ENCODE measurements at regions of chr17 and their contacts with region 1.

Region 1: DNA sequence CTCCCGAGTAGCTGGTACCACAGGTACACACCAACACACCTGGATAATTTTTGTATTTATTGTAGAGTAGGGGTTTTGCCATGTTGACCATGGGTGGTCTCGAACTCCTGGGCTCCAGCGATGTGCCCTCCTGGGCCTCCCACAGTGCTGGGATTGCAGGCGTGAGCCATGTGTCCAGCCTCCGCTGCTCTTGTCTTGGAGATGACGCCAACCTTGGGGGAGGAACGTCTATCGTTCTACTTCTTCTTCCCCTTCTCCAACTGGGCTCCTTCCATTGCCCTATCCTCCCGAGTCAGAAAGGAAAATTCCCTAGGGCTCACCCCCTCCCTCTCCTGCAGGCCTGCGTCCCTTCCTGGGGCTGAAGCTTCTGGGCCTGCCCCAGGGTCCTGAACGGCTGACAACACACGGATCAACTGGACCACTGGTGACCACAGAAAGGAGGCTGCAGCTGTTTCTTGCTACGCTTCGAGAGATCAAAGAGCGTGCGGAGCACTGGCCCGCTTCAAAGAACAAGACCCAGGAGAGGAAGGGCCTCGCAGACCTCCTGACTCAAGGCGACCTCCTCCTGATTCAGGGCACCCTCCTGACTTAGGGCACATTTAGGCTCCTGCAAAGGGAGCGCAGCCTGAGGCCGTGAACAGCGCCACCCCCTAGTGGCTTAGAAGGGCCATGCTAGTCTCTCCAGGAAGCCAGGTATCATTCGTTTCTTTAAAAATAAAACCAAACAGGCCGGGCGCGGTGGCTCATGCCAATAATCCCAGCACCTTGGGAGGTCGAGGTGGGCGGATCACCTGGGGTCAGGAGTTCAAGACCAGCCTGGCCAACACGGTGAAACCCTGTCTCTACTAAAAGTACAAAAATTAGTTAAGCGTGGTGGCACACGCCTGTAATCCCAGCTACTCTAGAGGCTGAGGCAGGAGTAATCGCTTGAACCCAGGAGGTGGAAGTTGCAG is 48.5 kb upstream of the HELZ start:
- DNase-seq: peak; percentile 54
- ATAC-seq: peak; percentile 88
- H3K4me3 ChIP-seq: no peak overlapping the region
- H3K27ac ChIP-seq: no peak overlapping the region
- H3K4me1 ChIP-seq: no peaks in the 10 kb centered on the region
- H3K27me3 ChIP-seq: no peaks in the 10 kb centered on the region
- CTCF ChIP-seq: peak; percentile 83

Region 2: GRCh38 chr17:67200720-67201301 is 92.7 kb before region 1 on chr17:
- CTCF ChIA-PET with region 1: interaction called, 16 read pairs
- POLR2A ChIA-PET with region 1: no interaction called
- intact Hi-C with region 1: no loop called
- DNase-seq: peak; percentile 53
- ATAC-seq: peak; percentile 82
- H3K4me3 ChIP-seq: no peak overlapping the region
- H3K27ac ChIP-seq: no peak overlapping the region
- H3K4me1 ChIP-seq: no peaks in the 10 kb centered on the region
- H3K27me3 ChIP-seq: no peaks in the 10 kb centered on the region
- CTCF ChIP-seq: peak; percentile 80

Region 3: DNA sequence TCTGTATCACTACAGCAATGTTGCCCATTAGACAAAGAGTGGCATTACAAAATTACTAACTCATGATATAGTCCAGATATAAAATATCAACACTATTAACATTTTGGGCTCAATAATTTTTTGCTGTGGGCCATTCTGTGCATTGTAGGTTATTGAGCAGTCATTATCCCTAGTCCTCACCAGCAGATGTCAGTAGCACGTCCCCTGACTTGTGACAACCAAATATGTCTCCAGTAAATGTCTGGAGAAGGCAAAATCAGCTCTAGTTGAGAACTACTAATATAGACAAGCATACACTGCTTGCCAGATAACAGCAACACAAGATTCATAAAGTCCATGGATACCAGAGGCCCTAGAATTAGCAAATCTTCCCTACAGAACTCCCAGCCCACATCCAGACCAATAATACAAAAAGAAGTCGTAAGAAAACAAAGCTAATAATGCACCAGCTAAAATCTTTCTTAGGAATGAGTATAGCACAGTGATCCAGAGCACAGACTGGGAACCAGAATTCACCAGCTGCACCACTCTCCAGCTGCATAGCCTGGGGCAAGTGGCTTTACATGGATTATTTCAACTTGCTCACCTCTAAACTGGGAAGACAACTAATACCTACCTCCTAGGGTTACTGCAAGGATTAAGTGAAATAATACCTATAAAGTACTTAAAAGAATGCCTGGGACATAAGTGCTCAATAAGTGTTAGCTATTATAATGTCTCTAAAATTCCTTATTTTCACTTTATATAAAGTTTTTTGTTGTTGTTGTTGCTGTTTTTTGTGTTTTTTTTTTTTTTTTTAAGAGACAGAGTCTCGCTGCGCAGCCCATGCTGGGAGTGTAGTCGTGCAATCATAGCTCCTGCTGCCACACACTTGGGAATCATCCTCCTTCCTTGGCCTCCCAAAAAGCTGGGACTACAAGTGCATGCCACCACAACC is 72.2 kb before region 1 on chr17:
- CTCF ChIA-PET with region 1: interaction called, 5 read pairs
- POLR2A ChIA-PET with region 1: no interaction called
- intact Hi-C with region 1: loop called (anchors 1 kb)
- DNase-seq: peak; percentile 54
- ATAC-seq: peak; percentile 66
- H3K4me3 ChIP-seq: no peak overlapping the region
- H3K27ac ChIP-seq: no peak overlapping the region
- H3K4me1 ChIP-seq: peaks cover 9% of the 10 kb centered on the region
- H3K27me3 ChIP-seq: no peaks in the 10 kb centered on the region
- CTCF ChIP-seq: peak; percentile 69

Region 4: GRCh38 chr17:67245073-67245755 is 48.3 kb before region 1 on chr17 and contains the start of gene HELZ:
- CTCF ChIA-PET with region 1: no interaction called
- POLR2A ChIA-PET with region 1: interaction called, 32 read pairs
- intact Hi-C with region 1: no loop called
- DNase-seq: peak; percentile 87
- ATAC-seq: peak; percentile 28
- H3K4me3 ChIP-seq: peak within 1 kb of the TSS; percentile 93
- H3K27ac ChIP-seq: peak within 1 kb of the TSS; percentile 9; the same call in 1 of the 2 replicates
- H3K4me1 ChIP-seq: peaks cover 20% of the 10 kb centered on the region
- H3K27me3 ChIP-seq: no peaks in the 10 kb centered on the region
- CTCF ChIP-seq: no peak
- total RNA-seq, gene HELZ: 22.6 and 31.3 TPM in 2 replicates

Region 5: GRCh38 chr17:67326441-67326840 is 32.9 kb after region 1 on chr17:
- CTCF ChIA-PET with region 1: no interaction called
- POLR2A ChIA-PET with region 1: no interaction called
- intact Hi-C with region 1: no loop called
- DNase-seq: no peak
- ATAC-seq: no peak
- H3K4me3 ChIP-seq: no peak overlapping the region
- H3K27ac ChIP-seq: no peak overlapping the region
- H3K4me1 ChIP-seq: no peaks in the 10 kb centered on the region
- H3K27me3 ChIP-seq: no peaks in the 10 kb centered on the region
- CTCF ChIP-seq: no peak

Region 6: GRCh38 chr17:67353929-67354574 is 60.5 kb after region 1 on chr17:
- CTCF ChIA-PET with region 1: no interaction called
- POLR2A ChIA-PET with region 1: no interaction called
- intact Hi-C with region 1: no loop called
- DNase-seq: no peak
- ATAC-seq: no peak
- H3K4me3 ChIP-seq: no peak overlapping the region
- H3K27ac ChIP-seq: no peak overlapping the region
- H3K4me1 ChIP-seq: no peaks in the 10 kb centered on the region
- H3K27me3 ChIP-seq: no peaks in the 10 kb centered on the region
- CTCF ChIP-seq: no peak

Region 7: DNA sequence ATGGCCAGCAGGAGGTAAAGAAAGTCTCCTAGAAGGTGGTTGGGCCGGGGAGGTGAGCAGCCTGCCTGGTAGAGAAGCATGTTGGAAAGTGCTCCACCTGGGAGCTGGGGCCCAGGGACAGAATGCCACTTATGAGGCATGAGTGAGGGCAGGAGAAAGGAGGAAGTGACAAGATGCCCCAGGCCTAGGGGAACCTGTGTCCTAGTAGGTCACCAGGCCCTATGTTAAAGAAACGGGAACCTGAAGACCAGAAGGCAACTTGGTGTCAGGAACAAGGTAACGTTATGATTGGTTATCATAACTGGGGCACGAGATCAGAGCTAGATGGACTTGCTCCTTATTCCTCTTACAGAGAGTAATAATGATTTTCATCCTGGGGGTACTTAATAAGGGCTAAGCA is 117.9 kb after region 1 on chr17:
- CTCF ChIA-PET with region 1: no interaction called
- POLR2A ChIA-PET with region 1: no interaction called
- intact Hi-C with region 1: no loop called
- DNase-seq: no peak
- ATAC-seq: no peak
- H3K4me3 ChIP-seq: no peak overlapping the region
- H3K27ac ChIP-seq: no peak overlapping the region
- H3K4me1 ChIP-seq: peaks cover 5% of the 10 kb centered on the region; the same call in 1 of the 2 replicates
- H3K27me3 ChIP-seq: no peaks in the 10 kb centered on the region
- CTCF ChIP-seq: no peak